ENCODE measurements at regions of chr6 and their contacts with region 1.

Region 1: GRCh38 chr6:138953451-138953850 is 34.6 kb downstream of the REPS1 start:
- DNase-seq: no peak
- H3K4me3 ChIP-seq: no peak overlapping the region
- H3K27ac ChIP-seq: no peak overlapping the region
- H3K4me1 ChIP-seq: peaks cover 11% of the 10 kb centered on the region
- H3K27me3 ChIP-seq: no peaks in the 10 kb centered on the region
- CTCF ChIP-seq: no peak
- POLR2A ChIP-seq: no peak

Region 2: GRCh38 chr6:138912308-138912707 is 41.1 kb before region 1 on chr6:
- CTCF ChIA-PET with region 1: no interaction called
- POLR2A ChIA-PET with region 1: no interaction called
- dilution Hi-C with region 1: no loop called
- intact Hi-C with region 1: no loop called
- DNase-seq: no peak
- H3K4me3 ChIP-seq: no peak overlapping the region
- H3K27ac ChIP-seq: no peak overlapping the region
- H3K4me1 ChIP-seq: no peaks in the 10 kb centered on the region
- H3K27me3 ChIP-seq: no peaks in the 10 kb centered on the region
- CTCF ChIP-seq: no peak
- POLR2A ChIP-seq: no peak

Region 3: GRCh38 chr6:138970856-138971425 is 17.5 kb after region 1 on chr6:
- CTCF ChIA-PET with region 1: interaction called, 10 read pairs
- POLR2A ChIA-PET with region 1: interaction called, 3 read pairs
- dilution Hi-C with region 1: no loop called
- intact Hi-C with region 1: no loop called
- DNase-seq: peak; percentile 85
- H3K4me3 ChIP-seq: peak overlapping the region in 1 of 3 experiments; percentile 27
- H3K27ac ChIP-seq: peak overlapping the region; percentile 91
- H3K4me1 ChIP-seq: peaks cover 48% of the 10 kb centered on the region
- H3K27me3 ChIP-seq: no peaks in the 10 kb centered on the region
- CTCF ChIP-seq: no peak
- POLR2A ChIP-seq: no peak